ENCODE measurements at regions of chr13 and their contacts with region 1.

Region 1: GRCh38 chr13:100254002-100254401 is 165.1 kb downstream of the PCCA start:
- DNase-seq: peak; percentile 29
- H3K4me3 ChIP-seq: no peak overlapping the region
- H3K27ac ChIP-seq: no peak overlapping the region
- H3K4me1 ChIP-seq: peaks cover 14% of the 10 kb centered on the region
- H3K27me3 ChIP-seq: no peaks in the 10 kb centered on the region
- CTCF ChIP-seq: no peak

Region 2: GRCh38 chr13:100129605-100130004 is 124.4 kb before region 1 on chr13:
- CTCF ChIA-PET with region 1: no interaction called
- dilution Hi-C with region 1: no loop called
- in situ Hi-C with region 1: no loop called
- intact Hi-C with region 1: no loop called
- DNase-seq: no peak
- H3K4me3 ChIP-seq: no peak overlapping the region
- H3K27ac ChIP-seq: no peak overlapping the region
- H3K4me1 ChIP-seq: peaks cover 5% of the 10 kb centered on the region
- H3K27me3 ChIP-seq: no peaks in the 10 kb centered on the region
- CTCF ChIP-seq: no peak

Region 3: DNA sequence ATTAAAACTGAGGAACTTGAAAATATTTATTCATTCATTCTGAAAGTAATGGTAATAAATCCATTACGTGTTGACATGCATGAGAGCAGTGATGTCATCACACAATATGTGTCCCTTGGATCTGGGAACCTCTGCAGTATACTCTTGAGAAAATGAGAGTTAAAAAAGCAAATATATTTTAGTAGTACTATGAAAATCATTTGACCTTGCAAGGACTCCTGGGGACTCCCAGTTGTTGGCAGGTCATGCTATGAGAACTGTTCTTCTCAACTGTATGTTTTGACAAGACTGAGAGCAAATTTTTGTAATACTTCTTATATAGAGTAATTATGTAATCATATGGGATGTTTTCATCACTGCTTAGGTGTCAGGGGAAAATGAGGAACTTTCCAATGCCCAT is 84.3 kb after region 1 on chr13:
- CTCF ChIA-PET with region 1: no interaction called
- dilution Hi-C with region 1: loop called (anchors 5 kb)
- in situ Hi-C with region 1: no loop called
- intact Hi-C with region 1: no loop called
- DNase-seq: no peak
- H3K4me3 ChIP-seq: no peak overlapping the region
- H3K27ac ChIP-seq: no peak overlapping the region
- H3K4me1 ChIP-seq: no peaks in the 10 kb centered on the region
- H3K27me3 ChIP-seq: no peaks in the 10 kb centered on the region
- CTCF ChIP-seq: no peak